Heart right ventricle (tissue), 16 donors: ENCODE measurements at regions of chr5 and their contacts with region 1.

Region 1: GRCh38 chr5:91101600-91102379 is 281.3 kb downstream of the ARRDC3 start:
- DNase-seq: peak; percentile 47 to 86
- ATAC-seq: peak; percentile 91 to 97 (median 96)
- H3K4me3 ChIP-seq: no peak overlapping the region
- H3K27ac ChIP-seq: peak overlapping the region in 3 of 10 donors; percentile 9 to 26 (median 11)
- H3K4me1 ChIP-seq: peaks cover 0 to 31% (median 4%) of the 10 kb centered on the region in 9 donors
- H3K27me3 ChIP-seq: no peaks in the 10 kb centered on the region
- CTCF ChIP-seq: peak; percentile 71 to 87 (median 84)

Region 2: DNA sequence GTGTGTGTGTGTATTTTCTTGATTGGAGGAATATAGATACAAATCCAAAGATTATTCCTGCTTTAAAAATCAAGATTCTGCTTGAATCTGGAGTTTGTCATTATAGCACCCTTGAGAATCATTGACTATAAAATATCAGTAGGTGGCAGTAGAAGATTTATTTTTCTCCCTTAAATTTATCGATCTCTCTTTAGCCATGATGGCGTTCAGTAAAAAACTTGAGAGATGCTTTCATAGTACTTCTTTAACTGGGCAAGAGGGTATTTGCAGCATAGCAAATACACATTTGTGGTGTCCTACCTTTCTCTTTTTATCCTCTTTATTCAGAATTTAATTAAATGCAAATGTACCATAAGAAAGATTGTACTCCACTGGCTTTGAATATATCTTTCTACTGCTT is 235.5 kb before region 1 on chr5:
- intact Hi-C with region 1: loop called in 7 of 10 experiments (anchors 5 to 10 kb)
- DNase-seq: no peak
- ATAC-seq: peak in 4 of 8 donors; percentile 46 to 63 (median 61)
- H3K4me3 ChIP-seq: no peak overlapping the region
- H3K27ac ChIP-seq: no peak overlapping the region
- H3K4me1 ChIP-seq: peaks cover 0 to 20% (median 11%) of the 10 kb centered on the region in 9 donors
- H3K27me3 ChIP-seq: no peaks in the 10 kb centered on the region
- CTCF ChIP-seq: peak; percentile 28 to 70 (median 59)

Region 3: DNA sequence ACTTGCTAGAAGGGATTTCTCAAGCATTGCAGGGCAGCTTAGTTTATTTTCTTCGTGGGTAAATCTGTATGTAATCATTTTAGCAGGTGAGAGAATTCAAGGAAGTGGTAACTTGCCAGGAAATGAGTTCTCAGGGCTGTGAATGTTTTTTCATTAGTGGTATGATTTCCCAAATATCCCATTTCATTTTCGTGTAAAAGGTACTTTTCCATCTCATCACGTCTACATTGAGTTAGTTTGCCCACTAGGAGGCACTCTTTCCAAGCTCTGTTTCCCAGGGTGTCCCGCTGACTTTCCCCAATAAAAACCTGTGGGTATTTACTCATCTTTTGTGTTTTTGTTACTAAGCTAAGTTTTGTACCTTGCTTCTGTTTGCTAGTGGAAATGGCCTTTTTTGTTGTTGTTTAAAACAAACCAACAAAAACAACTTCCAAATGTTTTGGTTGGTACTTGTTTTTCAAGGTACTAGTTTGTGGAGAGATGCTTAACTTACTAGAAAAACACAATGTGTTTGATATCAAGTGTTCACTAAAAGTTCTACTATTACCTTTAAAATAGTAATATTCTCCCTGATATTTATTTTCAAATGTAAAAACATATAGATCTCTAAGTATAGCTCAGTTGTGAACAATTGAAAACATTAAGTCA is 169.6 kb before region 1 on chr5:
- intact Hi-C with region 1: loop called in 8 of 10 experiments (anchors 5 to 10 kb)
- DNase-seq: peak in 1 of 2 donors; percentile 63
- ATAC-seq: peak in 7 of 8 donors; percentile 51 to 84 (median 67)
- H3K4me3 ChIP-seq: no peak overlapping the region
- H3K27ac ChIP-seq: peak overlapping the region in 1 of 10 donors; percentile 25
- H3K4me1 ChIP-seq: peaks cover 0 to 15% (median 0%) of the 10 kb centered on the region in 9 donors
- H3K27me3 ChIP-seq: no peaks in the 10 kb centered on the region
- CTCF ChIP-seq: peak; percentile 54 to 87 (median 82)

Region 4: GRCh38 chr5:91180506-91180905 is 78.7 kb after region 1 on chr5:
- intact Hi-C with region 1: loop called in 1 of 10 experiments (anchors 2 kb)
- DNase-seq: no peak
- ATAC-seq: no peak
- H3K4me3 ChIP-seq: no peak overlapping the region
- H3K27ac ChIP-seq: no peak overlapping the region
- H3K4me1 ChIP-seq: peaks cover 0 to 39% (median 0%) of the 10 kb centered on the region in 9 donors
- H3K27me3 ChIP-seq: no peaks in the 10 kb centered on the region
- CTCF ChIP-seq: no peak

Region 5: DNA sequence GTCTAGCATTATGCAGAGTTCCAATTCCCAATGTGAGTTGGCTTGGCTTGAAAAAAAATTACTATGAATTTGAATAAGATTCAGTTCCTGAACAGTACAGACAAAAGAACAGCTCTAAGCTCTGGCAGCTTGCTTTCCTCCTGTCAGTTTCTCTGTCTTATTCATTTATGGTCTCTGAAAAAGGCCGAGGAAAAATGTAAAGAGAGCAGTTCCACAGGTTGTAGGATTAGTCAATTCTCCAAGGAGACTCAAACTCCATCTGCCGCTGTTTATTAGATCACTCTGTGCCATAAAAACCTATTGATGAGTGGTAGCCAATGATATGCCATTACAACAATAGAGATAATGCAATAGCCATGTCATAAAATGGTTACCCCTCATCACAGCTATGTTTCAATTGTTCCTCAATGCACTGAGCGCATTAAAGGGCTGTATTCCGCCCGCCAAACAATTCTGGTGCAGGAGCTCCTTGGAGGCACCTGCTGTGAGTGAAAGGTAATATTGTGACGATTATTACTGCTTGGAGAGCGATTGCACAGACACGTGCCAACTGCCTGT is 93.1 kb after region 1 on chr5:
- intact Hi-C with region 1: no loop called
- DNase-seq: no peak
- ATAC-seq: no peak
- H3K4me3 ChIP-seq: no peak overlapping the region
- H3K27ac ChIP-seq: no peak overlapping the region
- H3K4me1 ChIP-seq: peaks cover 0 to 12% (median 4%) of the 10 kb centered on the region in 9 donors
- H3K27me3 ChIP-seq: no peaks in the 10 kb centered on the region
- CTCF ChIP-seq: no peak

Region 6: GRCh38 chr5:91219803-91220371 is 118.1 kb after region 1 on chr5:
- intact Hi-C with region 1: loop called in 7 of 10 experiments (anchors 5 to 10 kb)
- DNase-seq: no peak
- ATAC-seq: peak in 3 of 8 donors; percentile 35 to 68 (median 61)
- H3K4me3 ChIP-seq: no peak overlapping the region
- H3K27ac ChIP-seq: peak overlapping the region in 4 of 10 donors; percentile 25 to 86 (median 38)
- H3K4me1 ChIP-seq: peaks cover 0 to 21% (median 0%) of the 10 kb centered on the region in 9 donors
- H3K27me3 ChIP-seq: no peaks in the 10 kb centered on the region
- CTCF ChIP-seq: peak in 7 of 9 donors; percentile 33 to 58 (median 44)

Region 7: GRCh38 chr5:91225848-91226686 is 124.3 kb after region 1 on chr5:
- intact Hi-C with region 1: loop called in 3 of 10 experiments (anchors 5 to 10 kb)
- DNase-seq: no peak
- ATAC-seq: peak in 3 of 8 donors; percentile 16 to 46 (median 26)
- H3K4me3 ChIP-seq: no peak overlapping the region
- H3K27ac ChIP-seq: no peak overlapping the region
- H3K4me1 ChIP-seq: peaks cover 0 to 7% (median 0%) of the 10 kb centered on the region in 9 donors
- H3K27me3 ChIP-seq: no peaks in the 10 kb centered on the region
- CTCF ChIP-seq: peak in 8 of 9 donors; percentile 9 to 54 (median 38)

Region 8: GRCh38 chr5:91280362-91281269 is 178.8 kb after region 1 on chr5:
- intact Hi-C with region 1: loop called in 6 of 10 experiments (anchors 2 to 10 kb)
- DNase-seq: peak; percentile 94
- ATAC-seq: peak; percentile 97 to 99 (median 98)
- H3K4me3 ChIP-seq: peak overlapping the region; percentile 32 to 69 (median 56)
- H3K27ac ChIP-seq: peak overlapping the region; percentile 78 to 95 (median 93)
- H3K4me1 ChIP-seq: peaks cover 0 to 34% (median 8%) of the 10 kb centered on the region in 9 donors
- H3K27me3 ChIP-seq: no peaks in the 10 kb centered on the region
- CTCF ChIP-seq: peak in 2 of 9 donors; percentile 20 to 25

Region 9: GRCh38 chr5:91313757-91314673 is 212.2 kb after region 1 on chr5:
- intact Hi-C with region 1: no loop called
- DNase-seq: peak; percentile 28 to 76
- ATAC-seq: peak; percentile 64 to 92 (median 84)
- H3K4me3 ChIP-seq: peak overlapping the region in 1 of 10 donors; percentile 46
- H3K27ac ChIP-seq: peak overlapping the region in 9 of 10 donors; percentile 34 to 93 (median 75)
- H3K4me1 ChIP-seq: peaks cover 10 to 63% (median 27%) of the 10 kb centered on the region in 9 donors
- H3K27me3 ChIP-seq: no peaks in the 10 kb centered on the region
- CTCF ChIP-seq: no peak